ENCODE measurements at regions of chr14 and their contacts with region 1.

Region 1: GRCh38 chr14:64764641-64765520 is 60.7 kb downstream of the PLEKHG3 start:
- DNase-seq: peak; percentile 49
- ATAC-seq: peak; percentile 66
- H3K4me3 Mint-ChIP-seq: peak overlapping the region; percentile 59
- H3K27ac Mint-ChIP-seq: no peak overlapping the region
- H3K4me1 Mint-ChIP-seq: peaks cover 14% of the 10 kb centered on the region
- H3K27me3 Mint-ChIP-seq: peaks cover 15% of the 10 kb centered on the region
- CTCF ChIP-seq: no peak

Region 2: GRCh38 chr14:64671591-64671990 is 93.3 kb before region 1 on chr14:
- CTCF ChIA-PET with region 1: interaction called, 6 read pairs
- POLR2A ChIA-PET with region 1: no interaction called
- intact Hi-C with region 1: loop called (anchors 1 kb)
- DNase-seq: no peak
- ATAC-seq: no peak
- H3K4me3 Mint-ChIP-seq: no peak overlapping the region
- H3K27ac Mint-ChIP-seq: no peak overlapping the region
- H3K4me1 Mint-ChIP-seq: peaks cover 4% of the 10 kb centered on the region
- H3K27me3 Mint-ChIP-seq: peaks cover 18% of the 10 kb centered on the region
- CTCF ChIP-seq: no peak